Left cardiac atrium (tissue), 4 donors: ENCODE measurements at regions of chr3 and their contacts with region 1.

Region 1: DNA sequence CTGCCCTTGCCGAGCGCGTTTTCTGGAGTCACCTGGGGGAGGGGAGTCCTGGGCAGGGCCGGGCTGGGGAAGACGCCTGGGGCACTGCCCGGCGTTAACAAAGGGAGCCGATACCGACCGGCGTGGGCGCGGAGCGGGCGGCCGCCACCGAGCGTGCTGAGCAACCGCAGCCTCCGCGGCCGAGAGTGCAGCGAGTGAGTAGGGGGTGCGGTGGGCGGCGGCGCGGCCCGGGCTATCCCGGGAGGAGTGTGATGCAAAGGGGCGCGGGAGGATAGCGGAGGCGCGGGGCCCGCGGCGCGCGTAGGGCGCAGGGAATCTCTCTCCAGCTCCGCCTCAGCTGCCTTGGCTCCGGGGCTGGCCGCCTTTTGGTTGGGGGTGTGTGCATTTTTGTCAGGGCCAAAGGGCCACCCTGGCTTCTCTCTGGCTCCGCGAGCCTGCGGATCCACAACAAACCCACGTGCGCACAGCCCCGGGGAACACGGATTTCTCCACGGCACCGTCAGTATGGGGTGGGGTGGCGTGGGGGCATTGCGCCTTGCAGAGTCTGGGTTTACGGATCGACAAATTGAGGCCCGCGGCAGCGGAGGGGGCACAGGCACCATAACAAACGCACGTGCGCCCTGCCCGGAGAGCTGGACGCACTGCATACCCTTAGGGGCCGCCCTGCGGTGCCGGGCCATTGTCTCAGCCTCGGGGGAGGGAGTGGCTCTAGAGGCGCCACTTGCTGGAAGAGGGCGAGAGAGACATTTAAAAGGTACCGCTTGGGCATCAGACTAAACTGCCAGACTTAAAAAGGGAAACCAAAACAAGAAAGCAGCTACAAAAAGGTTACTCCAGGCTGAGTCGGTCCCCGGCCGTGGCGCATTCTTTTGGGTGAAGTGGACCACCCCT is 560 bp downstream of the ST6GAL1 start:
- DNase-seq: peak; percentile 78
- ATAC-seq: peak; percentile 83 to 86

Region 2: GRCh38 chr3:186630950-186631641 is 299.8 kb before region 1 on chr3:
- intact Hi-C with region 1: no loop called
- DNase-seq: no peak
- ATAC-seq: no peak

Region 3: GRCh38 chr3:186890911-186891310 is 40.0 kb before region 1 on chr3:
- intact Hi-C with region 1: loop called in 1 of 2 experiments (anchors 5 kb)
- DNase-seq: no peak
- ATAC-seq: no peak

Region 4: DNA sequence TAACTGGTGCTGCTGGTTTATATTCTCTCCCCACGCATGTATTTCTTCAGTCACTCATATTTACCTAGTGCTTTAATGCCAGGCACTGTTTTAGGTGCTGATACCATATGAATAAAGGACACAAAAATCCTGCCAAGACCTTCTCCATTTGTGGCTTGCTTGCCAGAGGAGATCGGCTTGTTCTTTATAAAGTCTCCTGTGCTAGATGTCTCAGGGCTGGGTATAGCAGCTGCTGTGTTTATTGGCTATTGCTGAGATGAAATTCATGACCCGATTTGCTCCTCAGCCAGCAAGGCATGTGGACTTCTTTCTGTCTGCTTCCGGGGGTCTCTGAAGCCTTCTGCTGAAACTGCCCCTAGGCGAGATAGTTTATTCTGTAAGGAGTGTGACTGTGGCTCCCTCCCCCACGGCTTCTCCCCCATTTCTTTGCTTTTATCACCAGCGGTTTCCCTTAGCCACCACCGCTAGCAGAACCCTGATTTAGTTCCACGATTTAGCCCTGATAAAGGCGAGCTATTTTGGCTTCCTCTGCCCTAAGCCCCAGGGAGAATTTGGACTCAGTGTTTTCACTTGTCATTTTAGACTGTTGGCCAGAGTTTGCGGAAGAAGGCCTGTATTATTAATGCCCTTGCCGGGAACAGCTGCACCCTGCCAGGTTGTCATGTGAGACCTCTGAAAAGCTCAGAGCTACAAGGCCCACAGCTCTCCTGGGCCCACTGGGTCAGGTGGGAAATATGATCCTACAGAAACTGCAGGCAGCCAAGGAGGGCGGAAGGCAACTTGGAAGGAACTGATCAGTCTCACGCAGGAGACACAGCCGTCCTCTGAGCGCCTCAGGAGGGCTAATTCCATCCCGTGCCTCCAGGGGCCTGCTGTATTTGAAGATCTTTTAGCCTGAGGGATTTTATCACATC is 46.2 kb after region 1 on chr3:
- intact Hi-C with region 1: loop called in 1 of 2 experiments (anchors 5 kb)
- DNase-seq: peak; percentile 81
- ATAC-seq: peak; percentile 81 to 90

Region 5: GRCh38 chr3:186988806-186989205 is 57.9 kb after region 1 on chr3:
- intact Hi-C with region 1: no loop called
- DNase-seq: no peak
- ATAC-seq: no peak

Region 6: GRCh38 chr3:187041362-187042307 is 110.7 kb after region 1 on chr3:
- intact Hi-C with region 1: loop called in 1 of 2 experiments (anchors 10 kb)
- DNase-seq: no peak
- ATAC-seq: peak; percentile 53 to 69

Region 7: GRCh38 chr3:187101184-187102072 is 170.5 kb after region 1 on chr3:
- intact Hi-C with region 1: loop called in 1 of 2 experiments (anchors 10 kb)
- DNase-seq: peak; percentile 87
- ATAC-seq: peak; percentile 85 to 88